ENCODE measurements at regions of chr4 and their contacts with region 1.

Region 1: GRCh38 chr4:25159884-25160713 is at the start of gene SEPSECS:
- DNase-seq: peak; percentile 95 to 96 (median 96)
- H3K4me3 ChIP-seq: peak within 1 kb of the TSS; percentile 62 to 68
- H3K4me3 Mint-ChIP-seq: peak within 1 kb of the TSS; percentile 90 to 97 (median 94)
- H3K27ac ChIP-seq: peak within 1 kb of the TSS; percentile 97
- H3K27ac Mint-ChIP-seq: peak within 1 kb of the TSS; percentile 94 to 99 (median 97)
- H3K4me1 ChIP-seq: peaks cover 38% of the 10 kb centered on the region
- H3K4me1 Mint-ChIP-seq: peaks cover 33 to 68% (median 43%) of the 10 kb centered on the region in 4 donors
- H3K27me3 ChIP-seq: no peaks in the 10 kb centered on the region
- H3K27me3 Mint-ChIP-seq: no peaks in the 10 kb centered on the region
- total RNA-seq, gene SEPSECS: 14.7 to 15.1 TPM

Region 2: DNA sequence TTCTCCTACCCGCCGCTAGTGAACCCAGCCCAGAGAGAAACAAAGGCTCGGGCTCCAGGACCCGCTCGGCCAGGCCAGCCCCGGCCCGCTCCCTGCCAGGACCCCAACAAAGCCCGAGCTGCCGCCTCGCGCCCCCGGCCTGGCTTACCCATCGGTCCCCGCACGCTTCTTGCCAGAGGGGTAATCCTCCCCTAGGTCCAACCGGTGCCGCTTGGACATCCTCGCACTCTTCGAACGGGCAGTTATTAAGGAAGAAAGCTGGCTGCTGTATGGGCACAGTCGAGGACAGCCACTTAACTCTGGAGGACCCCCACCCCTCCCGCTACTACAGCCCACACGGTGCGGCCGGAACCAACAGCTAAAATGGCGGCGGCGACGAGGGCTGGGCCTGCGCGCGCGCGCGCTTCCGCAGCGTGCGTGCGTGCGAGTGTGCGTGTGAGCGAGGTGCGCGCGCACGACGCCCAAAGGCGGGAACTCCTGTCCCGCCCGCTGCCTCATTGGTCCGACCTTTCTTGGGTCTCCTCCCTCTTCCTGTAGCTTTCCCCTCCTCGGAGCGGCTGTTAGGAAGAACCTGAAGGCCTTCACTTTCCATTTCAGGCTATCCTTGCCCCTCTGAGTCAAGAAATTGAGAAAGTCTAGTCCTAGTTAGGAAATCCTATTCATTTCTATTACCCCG is 575.8 kb before region 1 on chr4 and contains the start of gene DHX15:
- CTCF ChIA-PET with region 1: no interaction called
- POLR2A ChIA-PET with region 1: interaction called, 4 read pairs
- intact Hi-C with region 1: loop called (anchors 10 kb)
- DNase-seq: peak; percentile 91 to 94 (median 93)
- H3K4me3 ChIP-seq: peak within 1 kb of the TSS; percentile 85 to 96
- H3K4me3 Mint-ChIP-seq: peak within 1 kb of the TSS; percentile 97 to 100 (median 99)
- H3K27ac ChIP-seq: peak within 1 kb of the TSS; percentile 98
- H3K27ac Mint-ChIP-seq: peak within 1 kb of the TSS; percentile 97 to 100 (median 99)
- H3K4me1 ChIP-seq: peaks cover 45% of the 10 kb centered on the region
- H3K4me1 Mint-ChIP-seq: peaks cover 26 to 48% (median 40%) of the 10 kb centered on the region in 4 donors
- H3K27me3 ChIP-seq: no peaks in the 10 kb centered on the region
- H3K27me3 Mint-ChIP-seq: peaks cover 0 to 3% of the 10 kb centered on the region in 2 donors
- total RNA-seq, gene DHX15: 129 to 131 TPM

Region 3: GRCh38 chr4:24856586-24856985 is 303.5 kb before region 1 on chr4:
- CTCF ChIA-PET with region 1: no interaction called
- POLR2A ChIA-PET with region 1: no interaction called
- intact Hi-C with region 1: no loop called
- DNase-seq: no peak
- H3K4me3 ChIP-seq: no peak overlapping the region
- H3K4me3 Mint-ChIP-seq: no peak overlapping the region
- H3K27ac ChIP-seq: no peak overlapping the region
- H3K27ac Mint-ChIP-seq: no peak overlapping the region
- H3K4me1 ChIP-seq: no peaks in the 10 kb centered on the region
- H3K4me1 Mint-ChIP-seq: no peaks in the 10 kb centered on the region
- H3K27me3 ChIP-seq: no peaks in the 10 kb centered on the region
- H3K27me3 Mint-ChIP-seq: peaks cover 2 to 5% of the 10 kb centered on the region in 2 donors

Region 4: DNA sequence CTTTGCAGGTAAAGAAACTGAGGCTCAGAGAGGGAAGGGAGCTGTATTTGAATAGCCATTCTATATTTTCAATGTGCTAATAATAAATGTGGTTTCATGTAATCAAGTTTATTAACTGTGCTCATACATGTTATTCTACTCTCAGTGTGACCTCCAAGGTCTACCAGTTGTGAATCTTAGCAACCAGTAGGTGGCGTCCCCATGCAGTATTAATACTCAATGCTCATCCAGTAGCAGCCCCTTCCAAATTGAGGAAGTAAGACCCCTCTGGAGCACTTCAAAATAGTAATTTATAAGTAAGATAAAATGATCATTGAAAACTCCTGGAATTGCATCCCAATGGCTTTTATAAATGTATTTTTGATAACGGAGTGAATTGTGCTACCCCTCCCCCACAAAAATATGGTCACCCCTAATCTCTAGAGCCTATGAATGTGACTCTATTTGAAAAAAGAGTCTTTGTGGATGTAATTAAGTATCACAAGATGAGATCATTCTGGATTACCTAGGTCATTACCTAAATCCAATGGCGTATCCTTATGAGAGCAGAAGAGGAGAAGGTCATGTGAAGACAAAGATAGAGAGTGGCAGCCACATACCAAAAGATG is 20.5 kb after region 1 on chr4:
- CTCF ChIA-PET with region 1: interaction called, 26 read pairs
- POLR2A ChIA-PET with region 1: interaction called, 4 read pairs
- intact Hi-C with region 1: loop called (anchors 2 kb)
- DNase-seq: peak in 4 of 5 donors; percentile 23 to 39 (median 34)
- H3K4me3 ChIP-seq: no peak overlapping the region
- H3K4me3 Mint-ChIP-seq: no peak overlapping the region
- H3K27ac ChIP-seq: no peak overlapping the region
- H3K27ac Mint-ChIP-seq: peak overlapping the region in 3 of 7 donors; percentile 29 to 57 (median 43)
- H3K4me1 ChIP-seq: peaks cover 24% of the 10 kb centered on the region
- H3K4me1 Mint-ChIP-seq: peaks cover 22 to 29% (median 27%) of the 10 kb centered on the region in 4 donors
- H3K27me3 ChIP-seq: no peaks in the 10 kb centered on the region
- H3K27me3 Mint-ChIP-seq: no peaks in the 10 kb centered on the region

Region 5: DNA sequence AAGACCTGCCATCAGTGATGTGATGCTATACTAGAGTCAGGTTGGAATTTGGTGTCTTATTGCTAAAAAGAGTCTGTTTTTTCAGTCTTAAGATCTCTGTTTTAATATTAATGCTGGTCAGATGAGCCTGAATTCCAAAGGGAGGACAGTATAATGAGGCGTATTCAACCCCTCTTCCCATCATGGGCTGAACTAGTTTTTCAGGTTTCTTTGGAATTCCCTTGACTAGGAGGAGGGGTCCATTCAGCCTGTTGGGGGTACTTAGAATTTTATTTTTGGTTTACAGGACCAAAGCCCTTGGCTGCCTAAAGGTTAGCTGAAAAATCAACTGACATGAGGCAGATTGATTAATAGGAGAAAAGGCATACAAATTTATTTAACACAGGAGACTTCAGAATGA is 49.6 kb after region 1 on chr4:
- CTCF ChIA-PET with region 1: no interaction called
- POLR2A ChIA-PET with region 1: no interaction called
- intact Hi-C with region 1: no loop called
- DNase-seq: no peak
- H3K4me3 ChIP-seq: no peak overlapping the region
- H3K4me3 Mint-ChIP-seq: no peak overlapping the region
- H3K27ac ChIP-seq: no peak overlapping the region
- H3K27ac Mint-ChIP-seq: no peak overlapping the region
- H3K4me1 ChIP-seq: no peaks in the 10 kb centered on the region
- H3K4me1 Mint-ChIP-seq: peaks cover 0 to 4% (median under 1%) of the 10 kb centered on the region in 4 donors
- H3K27me3 ChIP-seq: no peaks in the 10 kb centered on the region
- H3K27me3 Mint-ChIP-seq: peaks cover 1 to 5% of the 10 kb centered on the region in 2 donors

Region 6: GRCh38 chr4:25282061-25282460 is 122.0 kb after region 1 on chr4:
- CTCF ChIA-PET with region 1: no interaction called
- POLR2A ChIA-PET with region 1: no interaction called
- intact Hi-C with region 1: no loop called
- DNase-seq: no peak
- H3K4me3 ChIP-seq: no peak overlapping the region
- H3K4me3 Mint-ChIP-seq: no peak overlapping the region
- H3K27ac ChIP-seq: no peak overlapping the region
- H3K27ac Mint-ChIP-seq: peak overlapping the region in 1 of 7 donors; percentile 19
- H3K4me1 ChIP-seq: no peaks in the 10 kb centered on the region
- H3K4me1 Mint-ChIP-seq: no peaks in the 10 kb centered on the region
- H3K27me3 ChIP-seq: no peaks in the 10 kb centered on the region
- H3K27me3 Mint-ChIP-seq: no peaks in the 10 kb centered on the region

Region 7: GRCh38 chr4:25312496-25313200 is 152.5 kb after region 1 on chr4 and contains the start of gene ZCCHC4:
- CTCF ChIA-PET with region 1: interaction called, 31 read pairs
- POLR2A ChIA-PET with region 1: interaction called, 45 read pairs
- intact Hi-C with region 1: loop called (anchors 1 kb)
- DNase-seq: peak; percentile 87 to 96 (median 91)
- H3K4me3 ChIP-seq: peak within 1 kb of the TSS; percentile 85 to 86
- H3K4me3 Mint-ChIP-seq: peak within 1 kb of the TSS; percentile 97 to 100 (median 98)
- H3K27ac ChIP-seq: peak within 1 kb of the TSS; percentile 64
- H3K27ac Mint-ChIP-seq: peak within 1 kb of the TSS; percentile 89 to 99 (median 97)
- H3K4me1 ChIP-seq: peaks cover 17% of the 10 kb centered on the region
- H3K4me1 Mint-ChIP-seq: peaks cover 8 to 26% (median 15%) of the 10 kb centered on the region in 4 donors
- H3K27me3 ChIP-seq: no peaks in the 10 kb centered on the region
- H3K27me3 Mint-ChIP-seq: peaks cover 7 to 9% of the 10 kb centered on the region in 2 donors
- total RNA-seq, gene ZCCHC4: 13.0 to 14.4 TPM

Region 8: DNA sequence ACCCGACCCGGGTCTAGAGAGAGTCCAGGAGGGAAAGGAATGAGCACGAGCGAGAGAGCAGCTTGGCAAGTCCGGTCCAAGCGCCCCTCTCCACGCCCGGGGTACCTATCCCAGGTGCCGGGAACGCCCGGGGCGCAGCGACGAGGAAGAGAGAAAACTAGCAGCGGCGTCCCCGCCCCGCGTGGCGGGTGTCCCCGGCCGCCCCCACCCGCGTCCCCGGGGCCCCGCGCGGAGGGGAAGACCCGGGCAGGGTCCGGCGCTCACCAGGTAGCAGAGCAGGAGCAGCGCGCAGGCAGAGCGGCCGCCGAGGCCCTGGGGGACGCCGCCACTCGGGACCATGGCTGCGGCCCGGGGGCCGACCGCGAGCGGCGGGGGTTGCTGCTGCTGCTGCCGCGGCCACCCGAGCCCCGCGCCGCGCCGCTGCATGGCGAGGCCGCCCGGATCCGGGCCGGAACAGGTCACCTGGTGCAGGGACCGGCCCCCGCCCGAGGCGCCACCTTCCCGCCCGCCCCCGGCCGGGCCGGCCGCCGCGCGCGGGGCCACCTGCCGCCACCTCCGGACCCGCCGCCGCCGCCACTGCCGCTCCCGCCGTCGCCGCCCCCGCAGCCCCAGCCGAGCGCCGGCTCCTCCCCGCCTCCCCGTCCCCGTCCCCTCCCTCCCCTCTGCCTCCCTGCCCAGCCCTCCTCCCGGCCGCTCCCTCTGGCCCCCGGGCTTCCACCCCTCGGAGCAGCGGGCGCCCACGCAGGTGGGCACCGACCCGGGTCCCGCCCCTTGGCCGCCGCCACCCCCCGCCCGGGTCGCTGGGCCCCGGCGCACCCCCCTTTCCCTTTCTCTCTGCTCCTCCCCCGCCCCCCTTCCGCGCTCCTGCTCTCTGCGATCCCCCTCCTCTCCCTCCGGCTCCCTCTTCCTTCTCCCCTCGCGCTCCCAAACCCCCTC is 702.6 kb after region 1 on chr4 and contains the start of gene SEL1L3:
- CTCF ChIA-PET with region 1: no interaction called
- POLR2A ChIA-PET with region 1: interaction called, 7 read pairs
- intact Hi-C with region 1: loop called (anchors 5 kb)
- DNase-seq: peak; percentile 31 to 54 (median 43)
- H3K4me3 ChIP-seq: peak within 1 kb of the TSS; percentile 71 to 74
- H3K4me3 Mint-ChIP-seq: peak within 1 kb of the TSS; percentile 95 to 100 (median 98)
- H3K27ac ChIP-seq: peak within 1 kb of the TSS; percentile 87
- H3K27ac Mint-ChIP-seq: peak within 1 kb of the TSS; percentile 92 to 99 (median 94)
- H3K4me1 ChIP-seq: peaks cover 48% of the 10 kb centered on the region
- H3K4me1 Mint-ChIP-seq: peaks cover 33 to 50% (median 41%) of the 10 kb centered on the region in 4 donors
- H3K27me3 ChIP-seq: no peaks in the 10 kb centered on the region
- H3K27me3 Mint-ChIP-seq: no peaks in the 10 kb centered on the region
- total RNA-seq, gene SEL1L3: 61.4 to 64.3 TPM

Region 9: DNA sequence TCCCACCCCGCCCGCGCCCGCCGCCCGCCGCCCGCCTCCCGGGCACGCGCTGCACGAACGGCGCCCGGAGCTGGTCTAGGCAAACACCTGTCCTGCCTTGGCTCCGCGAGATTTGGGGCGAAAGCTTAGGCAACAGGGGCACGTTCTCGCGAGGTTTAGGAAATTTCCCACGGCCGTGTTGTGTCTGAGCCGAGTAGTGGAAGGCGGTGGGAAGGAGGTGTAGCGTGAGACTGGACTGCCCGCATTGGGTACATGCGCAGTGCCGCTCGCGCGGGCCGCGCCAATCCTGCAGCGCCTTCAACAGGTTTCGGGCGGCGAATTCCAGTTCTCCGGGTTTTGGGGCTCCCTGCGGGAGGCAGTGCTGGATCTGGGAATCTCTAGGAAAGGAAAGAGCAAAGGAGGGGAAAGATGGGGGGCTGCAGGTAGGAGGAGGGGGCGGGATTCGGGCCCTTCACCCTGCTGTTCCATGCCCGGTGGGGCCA is 1159.4 kb after region 1 on chr4:
- CTCF ChIA-PET with region 1: no interaction called
- POLR2A ChIA-PET with region 1: no interaction called
- intact Hi-C with region 1: loop called (anchors 2 kb)
- DNase-seq: peak; percentile 96 to 98 (median 96)
- H3K4me3 ChIP-seq: peak overlapping the region; percentile 86
- H3K4me3 Mint-ChIP-seq: peak overlapping the region; percentile 96 to 100 (median 97)
- H3K27ac ChIP-seq: peak overlapping the region; percentile 97
- H3K27ac Mint-ChIP-seq: peak overlapping the region; percentile 98 to 99 (median 99)
- H3K4me1 ChIP-seq: peaks cover 32% of the 10 kb centered on the region
- H3K4me1 Mint-ChIP-seq: peaks cover 21 to 55% (median 32%) of the 10 kb centered on the region in 4 donors
- H3K27me3 ChIP-seq: no peaks in the 10 kb centered on the region
- H3K27me3 Mint-ChIP-seq: peaks cover 0 to 2% of the 10 kb centered on the region in 2 donors